Right ventricle myocardium superior (tissue), 1 donor: ENCODE measurements at regions of chr1 and their contacts with region 1.

Region 1: DNA sequence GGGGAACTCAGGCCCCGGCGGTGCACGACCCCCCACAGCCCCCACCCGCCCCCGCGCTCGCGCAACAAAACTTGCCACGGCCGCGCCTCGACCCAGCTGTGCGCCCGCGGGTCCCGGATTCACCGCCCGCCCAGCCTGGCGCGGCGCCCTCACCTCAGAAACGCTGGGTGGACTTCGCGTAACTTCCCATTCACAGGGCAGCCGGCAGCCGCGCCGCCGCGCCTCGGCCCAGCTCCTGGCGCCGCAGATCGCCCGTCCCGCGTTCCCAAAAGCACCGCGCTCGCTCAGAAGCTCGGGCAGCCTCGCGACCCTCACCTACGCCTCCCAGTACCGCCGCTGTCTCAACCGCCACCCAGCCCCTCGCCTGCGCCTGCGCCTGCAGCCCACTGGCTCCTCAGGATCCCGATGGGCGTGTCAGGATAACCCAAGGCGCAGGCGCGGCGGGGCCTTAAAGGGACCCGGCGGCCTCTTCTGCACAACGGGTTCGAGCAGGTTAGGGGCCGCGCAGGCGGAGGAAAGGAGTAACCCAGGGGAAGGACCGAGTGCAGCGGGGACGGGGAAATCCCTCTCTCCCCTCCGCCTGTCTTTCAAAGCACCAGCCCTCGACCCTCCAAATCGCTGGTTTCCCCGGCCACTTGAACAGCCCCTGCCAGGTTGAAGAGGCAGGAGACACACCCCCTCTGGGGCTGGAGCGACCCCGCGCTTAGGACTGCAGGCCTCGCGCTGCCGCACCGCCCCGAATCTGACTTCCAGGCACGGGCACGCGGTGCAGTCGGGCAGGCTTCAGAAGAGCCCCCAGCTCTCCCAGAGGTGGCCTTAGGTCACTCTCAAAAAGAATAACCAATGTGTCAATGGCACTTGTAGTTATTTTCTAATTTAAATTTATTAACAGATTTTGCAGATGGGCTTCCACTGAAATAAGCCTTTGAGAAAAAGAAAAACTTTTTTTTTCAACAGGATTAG is at the start of gene NBPF1:
- DNase-seq: peak; percentile 99
- ATAC-seq: peak; percentile 99
- total RNA-seq, gene NBPF1: 11.7 TPM

Region 2: GRCh38 chr1:16396591-16396990 is 216.9 kb before region 1 on chr1:
- intact Hi-C with region 1: no loop called
- DNase-seq: peak; percentile 64
- ATAC-seq: no peak

Region 3: GRCh38 chr1:16440470-16441281 is 172.8 kb before region 1 on chr1 and contains the start of gene NECAP2:
- intact Hi-C with region 1: loop called (anchors 10 kb)
- DNase-seq: peak; percentile 97
- ATAC-seq: peak; percentile 97
- total RNA-seq, gene NECAP2: 14.6 TPM

Region 4: DNA sequence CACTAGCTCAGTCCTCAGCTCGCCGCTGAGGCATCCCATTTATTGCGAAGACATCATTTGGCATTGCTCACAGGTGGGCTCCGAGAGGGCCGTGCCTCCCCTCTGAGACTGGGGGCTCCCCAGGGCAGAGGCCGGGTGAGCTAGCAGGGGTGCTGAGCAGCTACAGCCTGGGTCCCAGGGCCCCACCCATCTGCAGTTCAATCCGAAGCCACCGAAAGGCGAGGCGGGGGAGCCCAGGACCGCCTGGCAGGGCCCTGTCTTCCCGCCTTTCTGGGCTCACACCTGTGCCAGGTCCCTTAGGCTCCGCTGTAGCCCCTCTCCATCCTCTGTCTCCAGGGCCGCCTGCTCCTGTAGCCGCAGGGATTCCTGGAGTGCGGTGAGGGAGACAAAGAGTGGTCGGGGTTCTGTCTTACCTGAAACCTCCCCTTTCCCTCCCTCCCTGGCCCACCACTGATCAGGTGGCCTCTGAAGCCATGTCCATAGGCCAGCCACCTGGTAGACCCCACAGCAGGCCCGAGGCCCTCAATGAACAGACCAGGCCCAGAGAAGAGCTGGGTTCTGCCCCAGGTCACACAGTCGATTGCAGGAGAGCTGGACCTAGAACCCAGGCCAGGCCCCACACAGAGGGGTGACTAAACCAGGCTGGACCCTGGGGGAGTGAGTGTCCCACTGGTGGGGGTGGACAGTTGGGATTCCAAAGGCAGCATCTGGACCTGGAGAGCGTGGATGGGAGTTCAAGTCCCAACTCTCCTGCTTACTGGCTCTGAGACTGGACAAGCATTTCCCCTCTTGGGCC is 18.0 kb after region 1 on chr1:
- intact Hi-C with region 1: no loop called
- DNase-seq: peak; percentile 40
- ATAC-seq: no peak